Panc1 (cell line): ENCODE measurements at regions of chr5 and their contacts with region 1.

Region 1: GRCh38 chr5:127313847-127314473 is 23.4 kb downstream of the MEGF10 start:
- DNase-seq: peak; percentile 28
- ATAC-seq: peak; percentile 81
- H3K4me3 ChIP-seq: no peak overlapping the region
- H3K27ac ChIP-seq: no peak overlapping the region
- H3K4me1 ChIP-seq: no peaks in the 10 kb centered on the region
- H3K27me3 ChIP-seq: peaks cover 8% of the 10 kb centered on the region; the same call in 1 of the 2 replicates
- CTCF ChIP-seq: peak; percentile 89

Region 2: DNA sequence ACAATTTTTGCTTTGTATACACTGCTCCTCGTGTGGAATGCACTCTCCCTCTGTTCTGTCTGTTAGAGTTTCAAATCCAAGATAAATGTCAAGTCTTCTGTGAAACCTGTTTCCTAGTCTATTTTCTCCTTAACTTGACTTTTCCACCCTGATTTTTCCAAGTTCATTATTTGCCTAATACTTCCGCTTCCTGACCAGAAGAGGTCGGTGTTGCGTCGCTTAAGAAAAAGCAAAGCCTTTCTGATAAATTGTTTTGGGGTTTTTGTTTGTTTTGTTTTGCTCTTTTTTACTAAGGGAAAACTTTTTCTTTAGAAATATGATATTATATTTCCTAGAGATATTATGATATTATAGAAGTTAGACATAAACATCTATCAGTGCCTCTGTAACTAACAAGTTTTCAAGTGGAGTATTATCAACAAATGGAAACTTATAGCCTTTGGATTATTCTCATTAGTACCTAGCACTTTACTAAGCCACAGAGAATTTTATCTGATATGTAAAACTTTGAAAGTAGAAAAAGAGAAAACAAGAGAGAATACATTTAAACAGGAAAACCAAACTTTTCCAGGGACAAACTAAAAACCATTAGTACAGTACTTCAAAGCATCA is 657.5 kb before region 1 on chr5:
- CTCF ChIA-PET with region 1: no interaction called
- POLR2A ChIA-PET with region 1: no interaction called
- in situ Hi-C with region 1: no loop called
- intact Hi-C with region 1: loop called (anchors 5 kb)
- DNase-seq: no peak
- ATAC-seq: no peak
- H3K4me3 ChIP-seq: no peak overlapping the region
- H3K27ac ChIP-seq: no peak overlapping the region
- H3K4me1 ChIP-seq: no peaks in the 10 kb centered on the region
- H3K27me3 ChIP-seq: no peaks in the 10 kb centered on the region
- CTCF ChIP-seq: peak; percentile 83; the same call in 1 of the 2 replicates

Region 3: DNA sequence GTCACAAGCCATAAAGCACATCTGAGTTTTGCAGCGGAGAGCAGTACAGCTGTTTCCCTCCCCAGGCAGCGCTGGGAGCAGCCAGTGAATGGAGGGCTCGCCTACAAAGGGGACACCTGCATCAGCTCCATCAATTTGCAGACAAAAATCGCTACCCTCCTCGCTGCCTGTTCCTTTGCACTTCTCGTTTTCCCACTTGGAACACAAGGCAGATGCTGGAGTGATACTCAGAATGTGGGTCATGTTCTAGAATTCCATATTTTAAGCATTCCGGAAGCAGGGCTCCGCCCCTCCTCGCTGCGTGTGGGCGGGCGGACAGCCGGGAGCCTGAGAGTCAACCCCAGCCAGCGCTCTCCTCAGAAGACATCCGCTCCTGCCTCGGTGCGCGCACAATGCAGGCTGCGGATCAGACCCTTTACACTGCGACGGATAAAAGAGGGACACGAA is 444.9 kb before region 1 on chr5:
- CTCF ChIA-PET with region 1: no interaction called
- POLR2A ChIA-PET with region 1: no interaction called
- in situ Hi-C with region 1: no loop called
- intact Hi-C with region 1: loop called (anchors 10 kb)
- DNase-seq: no peak
- ATAC-seq: no peak
- H3K4me3 ChIP-seq: no peak overlapping the region
- H3K27ac ChIP-seq: no peak overlapping the region
- H3K4me1 ChIP-seq: no peaks in the 10 kb centered on the region
- H3K27me3 ChIP-seq: no peaks in the 10 kb centered on the region
- CTCF ChIP-seq: no peak